ENCODE measurements at regions of chr2 and their contacts with region 1.

Region 1: DNA sequence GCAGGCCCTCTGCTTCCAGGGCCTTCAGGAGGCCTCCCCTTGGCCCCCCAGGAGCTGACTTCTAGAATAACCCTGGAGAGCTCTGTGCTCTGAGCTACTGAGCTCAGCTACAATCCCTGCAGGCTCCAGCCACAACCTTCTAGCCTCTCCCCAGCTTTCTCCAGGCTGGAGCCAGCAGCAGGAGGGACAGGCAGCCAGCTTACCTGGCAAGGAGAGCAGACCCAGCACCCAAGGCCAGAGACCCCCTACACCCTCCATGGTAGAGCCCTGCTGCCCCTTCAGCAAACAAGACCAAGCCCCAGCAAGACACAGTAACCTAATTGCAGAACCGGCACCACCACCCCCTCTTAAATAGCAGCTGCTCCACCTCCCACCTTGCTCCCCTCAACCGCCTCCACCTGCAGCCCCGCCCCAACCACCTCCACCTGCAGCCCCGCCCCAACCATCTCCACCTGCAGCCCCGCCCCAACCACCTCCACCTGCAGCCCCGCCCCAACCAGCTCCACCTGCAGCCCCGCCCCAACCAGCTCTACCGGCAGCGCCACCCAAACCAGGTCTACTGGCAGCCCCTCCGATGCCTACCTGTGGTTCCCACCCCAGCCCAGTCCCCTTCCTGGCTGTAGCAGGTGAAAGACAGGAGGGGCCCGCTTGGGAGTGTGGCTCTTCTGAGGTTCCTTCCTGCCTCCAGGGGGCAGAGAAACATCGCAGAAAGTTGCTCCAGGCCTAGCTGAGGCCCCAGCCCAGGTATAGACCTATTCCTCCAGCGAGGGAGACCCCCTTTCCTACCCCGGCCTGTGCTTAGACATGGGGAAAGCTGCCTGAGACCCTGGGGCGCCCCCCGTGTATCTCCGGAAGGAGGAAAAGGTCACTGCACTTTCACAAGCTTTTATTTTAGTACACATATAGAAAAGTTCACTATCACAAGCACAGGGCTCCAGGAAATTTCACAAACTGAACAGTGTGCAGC is at the start of gene ASTL:
- DNase-seq: peak; percentile 70 to 79 (median 73)
- H3K4me3 ChIP-seq: no peak within 1 kb of the TSS
- H3K27ac ChIP-seq: no peak within 1 kb of the TSS
- H3K4me1 ChIP-seq: peaks cover 0 to 16% (median 8%) of the 10 kb centered on the region in 4 experiments
- H3K27me3 ChIP-seq: peaks cover 0 to 4% (median 0%) of the 10 kb centered on the region in 5 experiments

Region 2: DNA sequence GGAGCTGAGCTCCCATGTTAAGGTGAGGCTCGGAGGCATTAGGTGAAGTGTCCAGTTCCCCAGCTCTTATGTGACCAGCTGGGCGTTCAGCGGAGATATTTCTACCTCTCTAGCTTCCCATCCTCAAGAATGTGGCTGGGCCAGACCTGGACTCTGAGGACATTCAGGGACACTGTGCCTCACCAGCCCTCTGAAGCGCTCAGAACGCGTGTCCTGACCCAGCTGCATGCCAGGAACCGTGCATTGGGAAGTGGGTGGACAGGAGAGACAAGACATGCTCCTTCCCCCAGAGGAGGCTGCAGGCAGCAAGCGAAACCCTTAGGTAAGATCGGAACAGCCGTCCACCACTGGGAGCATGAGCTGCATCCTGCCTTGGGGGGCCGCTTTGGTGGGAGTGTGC is 65.7 kb before region 1 on chr2:
- CTCF ChIA-PET with region 1: no interaction called
- POLR2A ChIA-PET with region 1: no interaction called
- DNase-seq: no peak
- H3K4me3 ChIP-seq: no peak overlapping the region
- H3K27ac ChIP-seq: no peak overlapping the region
- H3K4me1 ChIP-seq: no peaks in the 10 kb centered on the region
- H3K27me3 ChIP-seq: peaks cover 0 to 3% (median 0%) of the 10 kb centered on the region in 5 experiments

Region 3: GRCh38 chr2:96099861-96100798 is 38.3 kb before region 1 on chr2:
- CTCF ChIA-PET with region 1: no interaction called
- POLR2A ChIA-PET with region 1: no interaction called
- DNase-seq: no peak
- H3K4me3 ChIP-seq: no peak overlapping the region
- H3K27ac ChIP-seq: no peak overlapping the region
- H3K4me1 ChIP-seq: peaks cover 0 to 6% (median under 1%) of the 10 kb centered on the region in 4 experiments
- H3K27me3 ChIP-seq: no peaks in the 10 kb centered on the region

Region 4: DNA sequence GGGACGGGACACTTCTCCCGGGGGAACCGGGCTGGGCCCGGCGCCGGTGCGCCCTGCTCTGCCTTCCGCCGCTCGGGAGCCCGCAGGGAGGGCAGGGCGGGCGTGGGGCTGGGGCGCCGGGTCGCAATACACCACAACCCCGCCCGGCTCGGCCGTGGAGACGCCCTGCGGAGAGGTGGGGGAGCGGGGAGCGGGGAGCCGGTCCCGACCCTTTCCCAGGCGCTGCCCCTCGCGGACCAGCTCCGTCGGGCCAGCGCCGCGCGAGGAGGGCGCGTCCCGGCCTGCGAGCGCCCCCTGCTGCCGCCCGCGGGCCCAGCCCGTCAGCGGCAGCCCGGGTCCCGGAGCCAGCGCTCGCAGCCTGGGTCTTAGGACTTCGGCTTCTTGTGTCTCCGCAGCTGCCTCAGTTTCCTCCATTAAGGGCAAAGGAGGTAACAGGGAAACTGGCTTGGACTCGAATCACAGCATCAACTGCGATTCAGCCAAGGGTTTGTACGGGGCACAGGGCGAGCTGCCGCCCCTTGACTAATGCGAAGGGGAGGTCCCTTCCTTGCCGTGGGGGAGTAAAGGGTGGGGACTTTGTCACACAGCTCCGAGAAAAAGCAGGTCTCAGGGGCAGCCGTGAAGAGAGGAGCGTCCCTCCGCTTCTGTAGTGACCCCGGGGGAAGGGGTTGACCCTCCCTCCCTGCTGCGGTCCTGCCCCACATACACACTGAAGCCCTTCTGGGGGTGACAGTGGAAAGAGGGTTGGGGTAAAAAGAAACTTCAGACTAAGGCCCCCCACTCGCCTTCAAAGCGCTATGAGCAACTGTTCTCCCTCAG is 21.4 kb before region 1 on chr2:
- CTCF ChIA-PET with region 1: interaction called, 16 read pairs
- POLR2A ChIA-PET with region 1: no interaction called
- DNase-seq: peak; percentile 28 to 54 (median 47)
- H3K4me3 ChIP-seq: peak overlapping the region in 6 of 7 experiments; percentile 42 to 73 (median 56)
- H3K27ac ChIP-seq: no peak overlapping the region
- H3K4me1 ChIP-seq: peaks cover 0 to 32% (median 27%) of the 10 kb centered on the region in 4 experiments
- H3K27me3 ChIP-seq: peaks cover 0 to 41% (median 8%) of the 10 kb centered on the region in 5 experiments

Region 5: GRCh38 chr2:96164459-96165184 is 26.2 kb after region 1 on chr2:
- CTCF ChIA-PET with region 1: interaction called, 346 read pairs
- POLR2A ChIA-PET with region 1: no interaction called
- DNase-seq: no peak
- H3K4me3 ChIP-seq: peak overlapping the region in 1 of 7 experiments; percentile 22
- H3K27ac ChIP-seq: peak overlapping the region in 1 of 2 experiments; percentile 14
- H3K4me1 ChIP-seq: peaks cover 0 to 36% (median 14%) of the 10 kb centered on the region in 4 experiments
- H3K27me3 ChIP-seq: no peaks in the 10 kb centered on the region

Region 6: GRCh38 chr2:96180521-96180920 is 42.1 kb after region 1 on chr2:
- CTCF ChIA-PET with region 1: interaction called, 346 read pairs
- POLR2A ChIA-PET with region 1: no interaction called
- DNase-seq: no peak
- H3K4me3 ChIP-seq: no peak overlapping the region
- H3K27ac ChIP-seq: no peak overlapping the region
- H3K4me1 ChIP-seq: peaks cover 0 to 3% (median under 1%) of the 10 kb centered on the region in 4 experiments
- H3K27me3 ChIP-seq: no peaks in the 10 kb centered on the region

Region 7: GRCh38 chr2:96265840-96266679 is 127.6 kb after region 1 on chr2 and contains the starts of genes CIAO1 and TMEM127:
- CTCF ChIA-PET with region 1: interaction called, 18 read pairs
- POLR2A ChIA-PET with region 1: interaction called, 5 read pairs
- DNase-seq: peak; percentile 95 to 99 (median 98)
- H3K4me3 ChIP-seq: peak within 1 kb of the TSS; percentile 72 to 100 (median 94)
- H3K27ac ChIP-seq: peak within 1 kb of the TSS; percentile 78 to 90
- H3K4me1 ChIP-seq: peaks cover 9 to 36% (median 32%) of the 10 kb centered on the region in 4 experiments
- H3K27me3 ChIP-seq: no peaks in the 10 kb centered on the region